GM10248 (cell line): ENCODE measurements at regions of chr5 and their contacts with region 1.

Region 1: DNA sequence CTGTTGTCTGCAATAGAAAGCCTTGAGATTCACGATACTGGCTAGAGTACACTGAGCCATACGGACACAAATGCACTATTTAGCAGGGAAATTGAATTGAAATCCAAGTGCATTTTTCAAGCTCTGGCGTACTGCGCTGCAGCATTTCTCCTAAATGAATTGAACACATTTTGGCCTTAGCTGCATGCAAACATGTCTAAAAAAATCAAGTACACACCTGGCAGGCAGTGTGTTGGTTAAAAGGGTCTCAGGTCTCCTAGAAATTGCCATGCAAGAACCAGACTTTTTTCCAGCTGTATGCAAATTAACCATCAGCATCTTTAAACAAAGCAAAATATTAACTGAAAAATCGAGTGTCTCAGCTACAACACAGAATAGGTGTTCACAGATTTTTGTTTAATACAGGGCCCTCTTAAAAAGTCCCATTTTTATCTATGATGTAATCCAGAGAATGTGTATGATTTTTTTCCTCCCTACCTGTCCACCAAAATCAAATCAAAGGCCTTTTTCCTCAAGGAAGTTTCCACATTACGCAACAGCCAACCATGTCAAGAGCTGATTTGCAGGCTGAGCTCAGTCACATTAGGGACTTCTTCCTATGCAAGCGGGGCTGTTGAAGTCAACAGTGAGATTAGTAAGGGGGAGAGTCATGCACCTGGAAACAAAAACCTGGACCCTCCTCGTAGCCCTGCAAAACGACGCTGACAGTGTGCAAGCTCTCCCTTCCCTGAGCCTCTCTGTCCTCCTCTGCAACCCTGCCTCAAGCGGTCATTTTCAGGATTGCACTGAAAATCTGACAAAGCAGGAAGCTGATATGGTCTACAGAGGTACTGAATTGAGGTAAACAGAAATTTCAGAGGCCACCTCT is 14.1 kb upstream of the SFXN1 start:
- DNase-seq: peak; percentile 60
- CTCF ChIP-seq: peak; percentile 71

Region 2: DNA sequence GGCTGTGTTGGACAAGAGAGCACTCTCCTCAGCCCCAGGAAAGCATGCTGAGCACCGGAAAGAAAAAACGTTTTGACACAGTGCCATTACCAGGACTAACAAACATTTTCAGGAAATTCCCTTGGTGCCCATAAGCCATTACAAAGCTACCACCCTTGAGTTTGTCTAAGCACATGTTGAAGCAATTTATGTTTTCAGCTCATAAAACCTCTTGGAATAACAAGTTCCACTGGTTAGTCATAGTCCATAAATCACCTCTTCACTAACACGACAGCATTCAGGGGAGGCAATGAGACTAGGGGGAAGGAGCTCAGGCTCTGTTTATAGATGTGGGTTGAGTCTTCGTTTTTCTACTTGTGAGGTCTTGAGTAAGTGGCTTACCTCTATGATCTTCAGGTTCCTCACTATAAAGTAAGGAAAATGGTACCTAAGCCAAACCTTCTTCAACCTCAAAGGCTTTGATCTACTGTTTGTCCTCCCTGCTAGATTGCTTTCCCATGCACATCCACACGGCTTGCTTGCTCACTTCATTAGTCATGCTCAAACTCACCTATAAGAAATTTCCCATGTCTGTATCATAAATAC is 85.8 kb before region 1 on chr5:
- CTCF ChIA-PET with region 1: no interaction called
- POLR2A ChIA-PET with region 1: no interaction called
- DNase-seq: no peak
- CTCF ChIP-seq: no peak

Region 3: DNA sequence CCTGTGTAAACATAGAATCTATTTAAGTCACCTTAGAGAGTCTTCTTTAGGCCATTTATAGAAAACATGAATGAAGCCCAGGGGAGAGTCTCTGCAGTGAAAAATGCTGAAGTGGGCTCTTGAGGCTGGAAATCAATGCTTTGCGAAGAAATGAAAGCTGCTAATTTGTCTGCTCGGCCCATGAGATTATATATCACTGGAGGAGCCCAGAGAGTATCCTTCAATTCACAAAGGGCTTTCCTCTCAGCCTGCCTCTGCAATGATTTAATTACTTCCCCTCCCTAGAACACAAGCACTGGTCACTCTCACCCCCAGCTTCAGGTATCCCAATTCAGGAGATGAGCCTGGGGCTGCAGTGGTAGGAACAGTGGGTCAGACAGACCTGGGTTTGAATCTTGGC is 12.1 kb before region 1 on chr5:
- CTCF ChIA-PET with region 1: interaction called, 25 read pairs
- POLR2A ChIA-PET with region 1: no interaction called
- DNase-seq: no peak
- CTCF ChIP-seq: no peak

Region 4: GRCh38 chr5:175478384-175479124 is 14.2 kb after region 1 on chr5 and contains the start of gene SFXN1:
- CTCF ChIA-PET with region 1: interaction called, 62 read pairs
- POLR2A ChIA-PET with region 1: interaction called, 3 read pairs
- DNase-seq: peak; percentile 96
- CTCF ChIP-seq: no peak

Region 5: DNA sequence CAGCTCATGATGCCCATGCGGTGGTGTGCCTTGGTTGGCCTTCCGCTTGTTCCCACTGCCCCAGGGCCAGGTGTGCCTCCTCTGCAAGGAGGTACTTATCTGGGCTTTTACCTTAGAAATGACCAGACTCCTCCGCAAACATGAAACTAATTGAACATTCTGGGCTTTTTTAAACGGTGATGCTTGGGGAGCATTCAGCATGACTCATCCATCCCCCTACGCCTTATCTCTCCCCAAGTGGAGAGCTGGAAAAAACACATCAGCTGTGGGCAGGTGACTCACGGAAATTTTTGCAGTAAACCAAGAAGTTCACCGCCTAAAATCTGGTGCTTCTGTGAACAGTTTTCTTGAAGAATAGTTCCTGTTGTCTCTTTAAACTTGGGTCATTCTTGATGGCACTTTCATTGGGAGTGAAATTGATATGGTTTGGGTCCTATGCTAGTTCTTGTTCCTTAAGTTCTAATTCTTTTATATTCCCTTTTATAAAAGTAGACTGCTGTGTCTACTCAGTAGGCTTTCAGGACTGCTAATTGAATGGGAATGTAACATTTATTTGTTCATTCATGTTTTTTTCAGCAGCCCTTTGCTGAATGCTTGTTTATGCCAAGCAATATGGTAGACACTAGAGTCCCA is 53.6 kb after region 1 on chr5:
- CTCF ChIA-PET with region 1: interaction called, 13 read pairs
- POLR2A ChIA-PET with region 1: no interaction called
- DNase-seq: peak; percentile 29
- CTCF ChIP-seq: no peak

Region 6: DNA sequence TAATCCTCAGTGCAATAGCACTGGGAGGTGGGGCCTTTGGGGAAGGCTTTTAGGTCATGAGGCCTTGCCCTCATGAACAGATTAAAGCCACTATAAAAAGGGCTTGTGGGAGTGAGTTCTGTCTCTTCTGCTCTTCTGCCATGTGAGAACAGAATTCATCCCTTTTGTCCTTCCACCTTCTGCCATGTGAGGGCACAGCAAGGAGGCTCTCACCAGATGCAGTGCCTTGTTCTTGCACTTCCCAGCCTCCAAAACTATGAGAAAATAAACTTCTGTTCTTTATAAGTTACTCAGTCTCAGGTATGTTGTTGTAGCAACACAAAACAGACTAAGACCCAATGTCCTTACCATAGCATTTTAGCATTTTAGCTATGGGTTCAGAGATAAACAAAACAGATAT is 325.4 kb after region 1 on chr5:
- CTCF ChIA-PET with region 1: no interaction called
- POLR2A ChIA-PET with region 1: no interaction called
- DNase-seq: no peak
- CTCF ChIP-seq: no peak